HepG2 (cell line): ENCODE measurements at regions of chr9 and their contacts with region 1.

Region 1: GRCh38 chr9:104177003-104177611 is 83.0 kb downstream of the SMC2 start:
- DNase-seq: peak; percentile 9
- ATAC-seq: peak; percentile 63; the same call in 2 of the 3 replicates
- H3K4me3 ChIP-seq: no peak overlapping the region
- H3K27ac ChIP-seq: no peak overlapping the region
- H3K4me1 ChIP-seq: no peaks in the 10 kb centered on the region
- H3K27me3 ChIP-seq: no peaks in the 10 kb centered on the region
- CTCF ChIP-seq: peak; percentile 52
- EP300 ChIP-seq: no peak
- POLR2A ChIP-seq: no peak
- RAD21 ChIP-seq: no peak

Region 2: GRCh38 chr9:104682642-104683041 is 505.5 kb after region 1 on chr9:
- CTCF ChIA-PET with region 1: interaction called, 8 read pairs
- POLR2A ChIA-PET with region 1: no interaction called
- in situ Hi-C with region 1: no loop called
- intact Hi-C with region 1: loop called (anchors 1 kb)
- DNase-seq: peak; percentile 57
- ATAC-seq: peak; percentile 72
- H3K4me3 ChIP-seq: no peak overlapping the region
- H3K27ac ChIP-seq: no peak overlapping the region
- H3K4me1 ChIP-seq: no peaks in the 10 kb centered on the region
- H3K27me3 ChIP-seq: no peaks in the 10 kb centered on the region
- CTCF ChIP-seq: peak; percentile 65
- EP300 ChIP-seq: no peak
- POLR2A ChIP-seq: no peak
- RAD21 ChIP-seq: no peak